ENCODE measurements at regions of chr20 and their contacts with region 1.

Region 1: DNA sequence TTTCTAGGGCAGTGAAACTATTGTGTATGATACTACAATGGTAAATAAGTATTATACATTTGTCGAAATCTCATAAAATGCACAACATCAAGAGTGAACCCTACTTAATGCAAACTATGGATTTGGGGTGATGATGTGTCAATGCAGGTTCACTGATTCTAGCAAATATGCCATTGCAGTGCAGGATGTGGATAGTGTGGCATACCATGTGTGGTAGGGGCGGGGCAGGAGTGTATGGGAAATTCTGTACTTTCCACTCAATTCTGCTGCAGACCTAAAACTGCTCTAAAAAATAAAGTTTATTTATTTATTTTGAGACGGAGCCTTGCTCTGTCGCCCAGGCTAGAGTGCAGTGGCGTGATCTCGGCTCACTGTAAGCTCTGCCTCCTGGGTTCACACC is 44.3 kb downstream of the ABHD12 start:
- DNase-seq: no peak
- ATAC-seq: no peak
- H3K4me3 ChIP-seq: no peak overlapping the region
- H3K27ac ChIP-seq: no peak overlapping the region
- H3K4me1 ChIP-seq: peaks cover 12% of the 10 kb centered on the region
- H3K27me3 ChIP-seq: no peaks in the 10 kb centered on the region
- CTCF ChIP-seq: no peak

Region 2: DNA sequence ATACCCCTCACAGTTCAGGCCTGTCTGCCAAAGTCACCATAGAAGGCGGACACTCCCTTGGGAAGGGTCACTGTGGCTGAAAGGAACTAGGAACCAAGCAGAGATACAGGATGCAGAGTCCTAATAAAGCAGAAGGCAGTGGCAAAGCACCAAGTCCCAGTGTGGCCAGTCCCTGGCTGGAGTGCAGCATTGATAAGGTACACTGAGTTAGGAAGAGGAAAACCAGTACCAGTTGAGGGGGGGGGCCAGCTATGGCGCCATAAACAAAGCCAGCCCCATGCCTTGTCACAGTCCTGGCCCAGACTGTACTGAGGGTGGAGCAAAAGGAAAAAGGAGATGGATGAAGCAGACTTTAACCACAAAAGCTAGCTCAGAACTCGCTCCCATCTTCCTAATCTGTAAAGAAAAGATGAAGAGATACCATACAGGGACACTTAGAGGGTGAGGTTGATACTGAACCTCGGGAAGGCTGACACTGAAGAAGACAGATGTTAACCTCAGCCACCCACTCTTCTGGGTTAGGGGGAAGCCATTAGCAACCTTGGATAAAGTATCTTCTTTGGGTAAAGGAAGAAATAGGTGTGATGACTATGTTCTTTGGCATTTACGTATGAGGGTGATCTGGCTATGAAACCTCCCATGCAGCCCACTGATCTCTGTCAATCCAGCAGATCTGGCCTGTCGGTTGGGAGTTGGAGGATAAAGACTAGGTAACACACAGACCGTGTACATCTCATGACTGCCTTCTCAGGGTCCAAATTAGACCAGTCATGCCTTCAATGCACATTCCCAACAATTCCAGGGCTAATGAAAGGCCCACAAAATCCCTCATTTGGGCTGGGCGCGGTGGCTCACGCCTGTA is 36.6 kb after region 1 on chr20:
- CTCF ChIA-PET with region 1: no interaction called
- POLR2A ChIA-PET with region 1: interaction called, 13 read pairs
- in situ Hi-C with region 1: no loop called
- intact Hi-C with region 1: loop called (anchors 5 kb)
- DNase-seq: no peak
- ATAC-seq: 0 out of 2 replicates have a peak, but pooled peaks have one; percentile 13
- H3K4me3 ChIP-seq: no peak overlapping the region
- H3K27ac ChIP-seq: no peak overlapping the region
- H3K4me1 ChIP-seq: no peaks in the 10 kb centered on the region; the same call in 1 of the 2 replicates
- H3K27me3 ChIP-seq: no peaks in the 10 kb centered on the region
- CTCF ChIP-seq: no peak

Region 3: DNA sequence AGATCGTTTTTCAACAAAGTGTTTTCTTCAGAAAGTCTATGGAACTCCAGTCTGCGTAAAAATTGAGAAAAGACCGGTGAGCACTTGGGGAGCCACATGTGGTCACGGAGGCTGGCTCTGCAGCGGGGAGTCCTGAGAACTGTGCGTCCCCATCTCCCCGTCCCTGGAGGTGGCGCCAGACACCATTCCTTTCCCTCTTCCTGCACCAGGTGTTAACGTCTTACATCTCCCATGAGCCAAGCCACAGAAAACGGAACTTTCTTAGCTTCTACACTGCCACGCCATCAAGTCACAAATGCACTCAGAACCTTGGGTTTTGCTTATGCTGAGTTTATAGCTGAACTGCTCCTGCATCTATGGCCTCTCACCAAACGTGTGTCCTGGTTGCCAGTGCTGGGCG is 123.7 kb after region 1 on chr20:
- CTCF ChIA-PET with region 1: no interaction called
- POLR2A ChIA-PET with region 1: no interaction called
- in situ Hi-C with region 1: no loop called
- intact Hi-C with region 1: no loop called
- DNase-seq: peak; percentile 8
- ATAC-seq: peak; percentile 51; the same call in 1 of the 2 replicates
- H3K4me3 ChIP-seq: no peak overlapping the region
- H3K27ac ChIP-seq: no peak overlapping the region
- H3K4me1 ChIP-seq: no peaks in the 10 kb centered on the region
- H3K27me3 ChIP-seq: no peaks in the 10 kb centered on the region
- CTCF ChIP-seq: no peak; the same call in 1 of the 2 replicates

Region 4: GRCh38 chr20:25605148-25605547 is 258.8 kb after region 1 on chr20:
- CTCF ChIA-PET with region 1: no interaction called
- POLR2A ChIA-PET with region 1: no interaction called
- in situ Hi-C with region 1: no loop called
- intact Hi-C with region 1: no loop called
- DNase-seq: no peak
- ATAC-seq: no peak
- H3K4me3 ChIP-seq: no peak overlapping the region
- H3K27ac ChIP-seq: no peak overlapping the region
- H3K4me1 ChIP-seq: no peaks in the 10 kb centered on the region
- H3K27me3 ChIP-seq: no peaks in the 10 kb centered on the region
- CTCF ChIP-seq: no peak